ENCODE measurements at regions of chr13 and their contacts with region 1.

Region 1: GRCh38 chr13:77653301-77653700 is 44.2 kb upstream of the SLAIN1 start:
- DNase-seq: no peak
- ATAC-seq: no peak
- H3K4me3 ChIP-seq: no peak overlapping the region
- H3K4me3 Mint-ChIP-seq: no peak overlapping the region
- H3K27ac ChIP-seq: no peak overlapping the region
- H3K27ac Mint-ChIP-seq: no peak overlapping the region
- H3K4me1 ChIP-seq: no peaks in the 10 kb centered on the region
- H3K4me1 Mint-ChIP-seq: no peaks in the 10 kb centered on the region
- H3K27me3 ChIP-seq: no peaks in the 10 kb centered on the region
- H3K27me3 Mint-ChIP-seq: peaks cover 0 to 8% (median 6%) of the 10 kb centered on the region in 5 donors

Region 2: DNA sequence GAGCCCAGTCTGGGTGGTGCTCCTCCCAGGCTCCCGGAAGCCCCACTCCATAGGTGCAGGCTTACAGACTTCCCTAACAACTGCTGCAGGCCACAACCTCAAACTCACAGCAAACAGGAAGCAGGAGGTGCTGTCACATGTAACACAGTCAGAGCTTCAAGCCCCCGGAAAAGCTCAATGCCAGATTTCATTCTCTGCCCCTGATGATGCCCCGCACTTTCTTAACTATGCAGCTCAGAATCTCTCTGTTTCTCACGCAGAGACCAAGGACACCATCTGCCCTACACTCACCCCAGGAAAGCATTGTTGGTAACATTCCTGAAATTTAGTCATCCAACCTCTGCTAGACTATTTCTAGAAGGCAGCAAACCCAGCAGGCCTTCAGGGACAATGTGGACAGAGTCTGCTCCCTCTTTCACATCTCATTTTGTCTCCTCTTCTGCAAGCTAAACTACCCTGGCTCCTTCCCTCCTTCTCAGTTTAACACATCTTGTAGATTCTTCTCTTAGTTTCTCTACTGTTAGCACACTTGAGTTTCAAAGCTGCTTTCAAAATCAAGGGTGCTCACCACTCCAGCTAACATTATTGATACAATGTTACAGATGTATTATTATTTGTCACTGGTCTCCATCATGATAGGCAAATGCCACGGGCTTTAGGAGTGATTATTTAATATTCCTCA is 929.6 kb before region 1 on chr13:
- CTCF ChIA-PET with region 1: no interaction called
- POLR2A ChIA-PET with region 1: no interaction called
- intact Hi-C with region 1: no loop called
- DNase-seq: peak in 5 of 9 donors; percentile 15 to 29 (median 26)
- ATAC-seq: peak; percentile 72
- H3K4me3 ChIP-seq: peak overlapping the region; percentile 22
- H3K4me3 Mint-ChIP-seq: no peak overlapping the region
- H3K27ac ChIP-seq: no peak overlapping the region
- H3K27ac Mint-ChIP-seq: no peak overlapping the region
- H3K4me1 ChIP-seq: peaks cover 0 to 8% of the 10 kb centered on the region in 2 donors
- H3K4me1 Mint-ChIP-seq: no peaks in the 10 kb centered on the region
- H3K27me3 ChIP-seq: no peaks in the 10 kb centered on the region
- H3K27me3 Mint-ChIP-seq: peaks cover 0 to 3% (median 0%) of the 10 kb centered on the region in 5 donors

Region 3: DNA sequence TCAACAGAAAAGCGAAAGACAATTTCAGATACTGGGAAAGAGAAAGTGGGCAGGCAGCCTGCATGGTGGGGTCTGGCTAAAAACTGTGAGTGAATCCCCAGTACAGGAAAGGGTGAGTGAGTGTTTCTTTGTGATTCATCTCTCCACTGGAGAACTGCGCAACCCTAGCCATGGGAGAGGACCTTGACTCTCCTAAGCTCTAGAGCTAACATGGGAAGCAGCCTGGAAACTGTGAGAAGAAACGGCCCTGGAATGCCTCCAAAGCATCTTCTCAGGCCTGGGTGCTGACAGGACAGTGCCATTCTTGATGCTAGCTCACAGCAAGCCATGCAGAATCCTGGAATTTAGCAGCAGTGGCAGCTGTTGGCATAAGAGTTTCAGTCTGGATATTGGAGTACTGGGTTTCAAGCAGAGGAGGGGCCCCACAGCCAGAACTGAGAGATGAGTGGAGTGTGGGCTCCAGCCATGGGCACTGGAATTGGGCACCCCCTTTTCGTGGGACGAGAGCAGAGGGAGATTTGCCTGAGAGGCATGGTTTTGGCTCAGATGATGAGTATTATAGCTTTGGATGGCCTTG is 25.5 kb after region 1 on chr13:
- CTCF ChIA-PET with region 1: no interaction called
- POLR2A ChIA-PET with region 1: no interaction called
- intact Hi-C with region 1: loop called in 1 of 2 experiments (anchors 5 kb)
- DNase-seq: no peak
- ATAC-seq: no peak
- H3K4me3 ChIP-seq: no peak overlapping the region
- H3K4me3 Mint-ChIP-seq: no peak overlapping the region
- H3K27ac ChIP-seq: no peak overlapping the region
- H3K27ac Mint-ChIP-seq: no peak overlapping the region
- H3K4me1 ChIP-seq: no peaks in the 10 kb centered on the region
- H3K4me1 Mint-ChIP-seq: no peaks in the 10 kb centered on the region
- H3K27me3 ChIP-seq: peaks cover 0 to 6% of the 10 kb centered on the region in 2 donors
- H3K27me3 Mint-ChIP-seq: peaks cover 31 to 53% (median 38%) of the 10 kb centered on the region in 5 donors